HepG2 (cell line): ENCODE measurements at regions of chr12 and their contacts with region 1.

Region 1: GRCh38 chr12:122951979-122952892 is 14.0 kb downstream of the ABCB9 start:
- DNase-seq: peak; percentile 59
- ATAC-seq: peak; percentile 98
- H3K4me3 ChIP-seq: no peak overlapping the region
- H3K27ac ChIP-seq: no peak overlapping the region
- H3K4me1 ChIP-seq: peaks cover 12% of the 10 kb centered on the region
- H3K27me3 ChIP-seq: no peaks in the 10 kb centered on the region
- CTCF ChIP-seq: peak; percentile 98
- EP300 ChIP-seq: no peak
- POLR2A ChIP-seq: no peak
- RAD21 ChIP-seq: peak; percentile 96

Region 2: DNA sequence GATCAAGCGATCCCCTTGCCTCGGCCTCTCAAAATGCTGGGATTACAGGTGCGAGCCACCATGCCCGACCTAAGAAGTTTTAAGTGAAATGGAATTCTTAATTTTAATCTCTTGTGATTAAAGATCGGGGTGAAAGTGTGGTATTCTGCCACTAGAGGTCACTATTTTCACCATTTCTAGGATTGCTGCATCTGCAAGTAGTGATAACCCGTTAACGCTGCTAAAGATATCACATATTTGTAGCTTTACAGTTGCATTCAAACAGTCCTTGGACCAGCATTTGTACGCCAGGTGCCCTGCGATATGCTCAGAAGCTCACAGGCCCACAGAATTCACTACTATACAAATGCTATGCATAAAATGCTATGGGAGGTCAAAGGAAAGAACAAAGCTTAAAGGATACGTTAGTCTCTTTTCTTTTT is 158.5 kb before region 1 on chr12:
- CTCF ChIA-PET with region 1: interaction called, 3 read pairs
- POLR2A ChIA-PET with region 1: no interaction called
- in situ Hi-C with region 1: no loop called
- intact Hi-C with region 1: loop called (anchors 2 kb)
- DNase-seq: peak; percentile 34
- ATAC-seq: peak; percentile 70
- H3K4me3 ChIP-seq: no peak overlapping the region
- H3K27ac ChIP-seq: no peak overlapping the region
- H3K4me1 ChIP-seq: no peaks in the 10 kb centered on the region
- H3K27me3 ChIP-seq: peaks cover 1 to 9% of the 10 kb centered on the region in 2 experiments; a peak in 3 of 5 replicates
- CTCF ChIP-seq: peak; percentile 75
- EP300 ChIP-seq: no peak
- POLR2A ChIP-seq: no peak
- RAD21 ChIP-seq: peak; percentile 43; the same call in 1 of the 2 replicates

Region 3: GRCh38 chr12:122860346-122861090 is 91.7 kb before region 1 on chr12:
- CTCF ChIA-PET with region 1: interaction called, 34 read pairs
- POLR2A ChIA-PET with region 1: no interaction called
- in situ Hi-C with region 1: loop called (anchors 5 kb)
- intact Hi-C with region 1: loop called (anchors 1 kb)
- DNase-seq: peak; percentile 48
- ATAC-seq: peak; percentile 56
- H3K4me3 ChIP-seq: no peak overlapping the region
- H3K27ac ChIP-seq: peak overlapping the region; percentile 25
- H3K4me1 ChIP-seq: peaks cover 61% of the 10 kb centered on the region
- H3K27me3 ChIP-seq: no peaks in the 10 kb centered on the region
- CTCF ChIP-seq: peak; percentile 94
- EP300 ChIP-seq: no peak
- POLR2A ChIP-seq: no peak
- RAD21 ChIP-seq: peak; percentile 93

Region 4: DNA sequence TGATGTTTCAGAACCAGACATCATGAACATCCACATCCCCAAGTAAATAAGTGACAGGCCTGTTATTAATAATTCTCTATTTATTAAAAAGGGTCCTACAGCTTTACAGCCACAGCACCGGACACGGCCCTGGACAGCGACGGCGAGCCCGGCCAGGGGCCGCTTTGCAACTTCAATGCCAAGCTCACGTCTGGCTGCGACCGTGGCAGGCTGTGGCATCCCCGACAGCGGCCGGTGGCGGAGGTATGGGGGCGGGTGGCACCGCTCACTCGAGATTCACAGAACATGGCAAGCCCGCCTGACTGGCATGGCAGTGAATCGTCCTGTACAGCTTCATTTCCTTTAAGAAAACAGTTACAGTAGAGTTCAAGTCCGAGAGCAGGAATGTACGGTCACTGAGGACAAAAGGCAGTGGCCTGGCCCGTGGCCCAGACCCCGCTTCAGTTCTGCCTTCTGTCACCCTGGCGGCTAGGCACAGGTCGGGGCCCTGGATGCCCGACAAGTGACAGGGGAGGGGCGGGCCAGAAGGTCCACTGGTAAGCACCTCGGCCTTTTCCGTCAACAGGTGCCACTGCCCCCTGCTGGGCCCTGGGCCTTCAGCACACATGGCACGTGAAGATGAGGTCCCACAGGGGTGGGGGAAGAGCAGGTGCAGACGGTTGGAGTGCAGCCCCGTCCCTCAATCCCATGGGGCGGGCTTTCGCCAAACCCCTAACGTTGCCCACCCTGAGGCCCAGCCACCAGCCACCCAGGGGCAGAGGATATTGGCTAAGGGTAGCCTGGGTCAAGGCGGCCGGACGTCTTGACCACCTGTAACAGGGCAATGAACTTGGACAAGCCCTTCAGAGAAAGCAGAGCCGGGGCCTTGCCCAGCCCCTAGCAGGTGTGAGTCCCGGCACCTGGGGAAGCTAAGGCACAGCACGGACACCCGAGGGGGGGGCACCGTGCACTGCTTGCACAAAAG is 86.7 kb before region 1 on chr12:
- CTCF ChIA-PET with region 1: interaction called, 34 read pairs
- POLR2A ChIA-PET with region 1: no interaction called
- in situ Hi-C with region 1: loop called (anchors 5 kb)
- intact Hi-C with region 1: loop called (anchors 1 kb)
- DNase-seq: peak; percentile 69
- ATAC-seq: peak; percentile 60
- H3K4me3 ChIP-seq: peak overlapping the region in 2 of 3 experiments; percentile 20 to 49; a peak in 3 of 6 replicates
- H3K27ac ChIP-seq: peak overlapping the region; percentile 82
- H3K4me1 ChIP-seq: peaks cover 72% of the 10 kb centered on the region
- H3K27me3 ChIP-seq: no peaks in the 10 kb centered on the region
- CTCF ChIP-seq: peak; percentile 88
- EP300 ChIP-seq: no peak; a peak in 1 of 4 replicates
- POLR2A ChIP-seq: 0 out of 4 replicates have a peak, but pooled peaks of 1 of the 2 experiments have one; percentile 24
- RAD21 ChIP-seq: peak; percentile 57

Region 5: GRCh38 chr12:122880668-122881067 is 71.6 kb before region 1 on chr12:
- CTCF ChIA-PET with region 1: interaction called, 14 read pairs
- POLR2A ChIA-PET with region 1: no interaction called
- in situ Hi-C with region 1: no loop called
- intact Hi-C with region 1: loop called (anchors 1 kb)
- DNase-seq: peak; percentile 47
- ATAC-seq: peak; percentile 97
- H3K4me3 ChIP-seq: no peak overlapping the region
- H3K27ac ChIP-seq: no peak overlapping the region
- H3K4me1 ChIP-seq: peaks cover 54% of the 10 kb centered on the region
- H3K27me3 ChIP-seq: no peaks in the 10 kb centered on the region
- CTCF ChIP-seq: peak; percentile 79
- EP300 ChIP-seq: no peak
- POLR2A ChIP-seq: no peak
- RAD21 ChIP-seq: peak; percentile 71